Psoas muscle (tissue), 8 donors: ENCODE measurements at regions of chr3 and their contacts with region 1.

Region 1: GRCh38 chr3:115217678-115218451 is 70.8 kb upstream of the ZBTB20 start:
- DNase-seq: no peak
- ATAC-seq: peak in 3 of 4 donors; percentile 27 to 91 (median 64)
- H3K4me3 ChIP-seq: no peak overlapping the region
- H3K27ac ChIP-seq: no peak overlapping the region
- H3K4me1 ChIP-seq: peaks cover 6% of the 10 kb centered on the region
- H3K27me3 ChIP-seq: no peaks in the 10 kb centered on the region
- CTCF ChIP-seq: peak; percentile 69

Region 2: GRCh38 chr3:114953800-114954199 is 264.1 kb before region 1 on chr3:
- intact Hi-C with region 1: no loop called
- DNase-seq: no peak
- ATAC-seq: no peak
- H3K4me3 ChIP-seq: no peak overlapping the region
- H3K27ac ChIP-seq: no peak overlapping the region
- H3K4me1 ChIP-seq: no peaks in the 10 kb centered on the region
- H3K27me3 ChIP-seq: no peaks in the 10 kb centered on the region
- CTCF ChIP-seq: no peak

Region 3: DNA sequence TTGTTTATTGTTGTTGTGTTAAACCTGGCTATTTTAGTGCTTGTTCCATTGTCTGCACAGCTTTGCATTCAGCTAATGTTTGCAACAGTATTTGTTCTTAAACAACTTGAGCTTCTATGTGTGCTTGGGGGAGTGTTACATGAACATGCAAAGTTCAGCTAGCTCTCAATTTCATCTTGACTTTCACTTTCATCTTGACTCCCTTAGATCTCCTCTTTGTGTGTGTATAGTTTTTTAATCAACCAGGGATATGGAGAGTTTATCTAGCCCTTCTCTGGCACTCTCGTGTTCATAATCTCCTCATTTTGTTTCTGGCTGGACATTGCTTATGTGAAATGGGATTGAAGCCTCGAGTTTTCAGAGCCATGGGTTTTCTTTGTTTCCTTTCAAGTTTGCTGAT is 141.7 kb after region 1 on chr3:
- intact Hi-C with region 1: no loop called
- DNase-seq: no peak
- ATAC-seq: no peak
- H3K4me3 ChIP-seq: no peak overlapping the region
- H3K27ac ChIP-seq: no peak overlapping the region
- H3K4me1 ChIP-seq: no peaks in the 10 kb centered on the region
- H3K27me3 ChIP-seq: no peaks in the 10 kb centered on the region
- CTCF ChIP-seq: no peak

Region 4: GRCh38 chr3:115692887-115693524 is 475.1 kb after region 1 on chr3:
- intact Hi-C with region 1: loop called (anchors 1 to 2 kb)
- DNase-seq: peak; percentile 54 to 66
- ATAC-seq: peak; percentile 90 to 99 (median 94)
- H3K4me3 ChIP-seq: no peak overlapping the region
- H3K27ac ChIP-seq: no peak overlapping the region
- H3K4me1 ChIP-seq: no peaks in the 10 kb centered on the region
- H3K27me3 ChIP-seq: no peaks in the 10 kb centered on the region
- CTCF ChIP-seq: peak; percentile 81

Region 5: DNA sequence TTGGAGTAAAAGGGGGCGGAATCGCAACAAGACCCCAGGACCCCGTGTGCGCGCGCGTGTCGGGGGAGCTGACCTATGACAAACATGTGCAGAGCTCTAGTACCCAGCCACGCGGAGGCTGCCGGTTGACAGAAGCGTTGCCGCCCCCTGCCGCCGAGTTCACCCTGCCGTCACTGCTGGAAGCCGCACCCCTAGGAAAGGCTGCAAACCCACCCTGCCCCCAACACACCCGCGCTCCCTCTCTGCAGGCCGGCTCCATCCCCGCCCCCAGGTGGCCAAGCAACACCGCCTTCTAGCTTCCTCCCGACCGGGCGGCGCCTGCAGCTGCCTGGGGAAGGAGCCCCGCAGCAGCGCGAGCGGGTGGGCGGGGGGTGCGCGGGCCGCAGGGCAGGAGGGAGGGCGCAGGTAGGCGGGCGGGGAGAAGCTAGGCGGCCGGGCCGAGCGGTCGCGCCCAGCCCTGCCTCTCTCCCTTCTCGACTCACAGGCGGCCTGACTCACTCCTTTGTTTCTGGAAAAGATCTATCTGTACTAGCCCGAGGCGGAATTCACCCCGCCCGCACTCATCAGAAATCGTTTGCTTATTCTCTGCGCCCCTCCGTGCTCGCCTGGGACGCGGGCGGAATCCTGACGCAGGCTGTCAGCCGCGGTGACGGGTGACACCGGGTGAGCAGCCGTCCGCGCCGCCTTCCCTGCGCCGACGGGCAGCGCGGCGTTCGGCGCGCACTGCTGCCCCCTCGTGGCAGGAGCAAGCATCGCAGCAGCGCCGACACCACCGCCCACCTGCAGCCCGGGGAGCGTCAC is 566.3 kb after region 1 on chr3:
- intact Hi-C with region 1: loop called (anchors 10 kb)
- DNase-seq: peak; percentile 90 to 93
- ATAC-seq: peak; percentile 94 to 96 (median 94)
- H3K4me3 ChIP-seq: peak overlapping the region; percentile 94
- H3K27ac ChIP-seq: peak overlapping the region; percentile 97
- H3K4me1 ChIP-seq: no peaks in the 10 kb centered on the region
- H3K27me3 ChIP-seq: no peaks in the 10 kb centered on the region
- CTCF ChIP-seq: peak; percentile 98

Region 6: GRCh38 chr3:115814778-115815380 is 597.0 kb after region 1 on chr3:
- intact Hi-C with region 1: loop called in 1 of 2 experiments (anchors 5 kb)
- DNase-seq: peak; percentile 59 to 74
- ATAC-seq: peak; percentile 67 to 89 (median 78)
- H3K4me3 ChIP-seq: no peak overlapping the region
- H3K27ac ChIP-seq: no peak overlapping the region
- H3K4me1 ChIP-seq: no peaks in the 10 kb centered on the region
- H3K27me3 ChIP-seq: no peaks in the 10 kb centered on the region
- CTCF ChIP-seq: peak; percentile 93